Transverse colon (tissue), 4 donors: ENCODE measurements at regions of chr18 and their contacts with region 1.

Region 1: DNA sequence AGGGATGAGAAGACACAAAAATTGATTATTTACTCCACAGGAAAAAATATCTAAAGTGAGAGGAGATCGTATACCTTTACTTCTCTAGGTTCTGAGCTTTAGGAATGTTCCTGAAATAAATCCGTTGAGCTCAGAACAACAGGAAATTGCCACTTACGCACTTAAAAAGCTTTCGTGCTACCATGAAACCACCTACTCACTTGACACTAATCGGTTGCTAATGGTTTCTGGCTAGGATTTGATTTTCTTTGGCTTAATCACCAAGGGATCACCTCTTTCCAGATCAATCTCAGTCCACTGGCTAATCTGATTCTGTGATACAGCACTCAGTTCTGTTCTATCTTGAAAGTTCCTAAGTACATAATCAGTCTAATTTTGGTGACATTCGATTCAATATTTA is 419.6 kb downstream of the DLGAP1 start:
- DNase-seq: no peak
- H3K4me3 ChIP-seq: no peak overlapping the region
- H3K27ac ChIP-seq: no peak overlapping the region
- H3K4me1 ChIP-seq: no peaks in the 10 kb centered on the region
- H3K27me3 ChIP-seq: no peaks in the 10 kb centered on the region
- CTCF ChIP-seq: no peak
- EP300 ChIP-seq: no peak
- POLR2A ChIP-seq: no peak

Region 2: GRCh38 chr18:3722320-3723000 is 313.1 kb before region 1 on chr18:
- in situ Hi-C with region 1: no loop called
- intact Hi-C with region 1: no loop called
- DNase-seq: no peak
- H3K4me3 ChIP-seq: no peak overlapping the region
- H3K27ac ChIP-seq: peak overlapping the region; percentile 2 to 44 (median 32)
- H3K4me1 ChIP-seq: peaks cover 0 to 53% (median 23%) of the 10 kb centered on the region in 4 donors
- H3K27me3 ChIP-seq: no peaks in the 10 kb centered on the region
- CTCF ChIP-seq: no peak
- EP300 ChIP-seq: no peak
- POLR2A ChIP-seq: no peak

Region 3: DNA sequence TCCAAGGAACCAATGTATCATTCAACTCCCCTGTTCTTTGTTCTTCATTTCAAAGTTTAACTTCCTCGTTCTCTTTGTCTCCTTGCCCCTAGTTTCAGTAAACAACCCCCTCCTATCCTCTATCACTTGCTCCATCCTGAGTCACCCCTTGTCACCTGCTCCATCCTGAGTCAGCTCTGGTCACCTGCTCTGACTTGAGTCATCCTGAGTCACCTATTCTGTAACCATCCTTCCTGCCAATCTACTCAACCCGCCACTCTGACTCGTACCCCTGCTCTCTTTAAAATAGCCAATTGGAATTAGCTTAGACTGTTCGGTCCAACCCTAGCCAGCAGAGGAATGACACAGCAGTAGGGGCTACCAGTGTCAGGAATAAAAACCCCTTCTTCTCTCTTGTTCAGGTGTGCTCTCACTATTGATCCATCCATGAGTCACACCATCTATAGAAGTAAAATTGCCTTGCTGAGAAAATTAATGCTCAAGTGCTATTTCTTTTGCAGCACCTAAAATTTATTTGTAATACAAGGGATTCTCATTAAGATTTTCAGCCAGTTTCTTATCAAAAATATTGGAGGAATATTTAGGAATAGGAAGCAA is 834.8 kb after region 1 on chr18:
- in situ Hi-C with region 1: no loop called
- intact Hi-C with region 1: loop called (anchors 10 kb)
- DNase-seq: no peak
- H3K4me3 ChIP-seq: no peak overlapping the region
- H3K27ac ChIP-seq: no peak overlapping the region
- H3K4me1 ChIP-seq: no peaks in the 10 kb centered on the region
- H3K27me3 ChIP-seq: no peaks in the 10 kb centered on the region
- CTCF ChIP-seq: no peak
- EP300 ChIP-seq: no peak
- POLR2A ChIP-seq: no peak